A549 (cell line): ENCODE measurements at regions of chr5 and their contacts with region 1.

Region 1: GRCh38 chr5:157059093-157059539 is at the start of gene HAVCR1:
- DNase-seq: peak; percentile 85 to 93
- ATAC-seq: peak; percentile 84 to 88
- H3K4me3 ChIP-seq: peak within 1 kb of the TSS; percentile 48
- H3K27ac ChIP-seq: peak within 1 kb of the TSS; percentile 89 to 92
- H3K4me1 ChIP-seq: peaks cover 67% of the 10 kb centered on the region
- CTCF ChIP-seq: no peak
- EP300 ChIP-seq: peak; percentile 41 to 44; a peak in 2 of 5 replicates
- POLR2A ChIP-seq: no peak
- RAD21 ChIP-seq: peak in 1 of 2 experiments; percentile 46; a peak in 4 of 5 replicates
- polyA plus RNA-seq, gene HAVCR1: 94.7 and 143 TPM in 2 replicates

Region 2: DNA sequence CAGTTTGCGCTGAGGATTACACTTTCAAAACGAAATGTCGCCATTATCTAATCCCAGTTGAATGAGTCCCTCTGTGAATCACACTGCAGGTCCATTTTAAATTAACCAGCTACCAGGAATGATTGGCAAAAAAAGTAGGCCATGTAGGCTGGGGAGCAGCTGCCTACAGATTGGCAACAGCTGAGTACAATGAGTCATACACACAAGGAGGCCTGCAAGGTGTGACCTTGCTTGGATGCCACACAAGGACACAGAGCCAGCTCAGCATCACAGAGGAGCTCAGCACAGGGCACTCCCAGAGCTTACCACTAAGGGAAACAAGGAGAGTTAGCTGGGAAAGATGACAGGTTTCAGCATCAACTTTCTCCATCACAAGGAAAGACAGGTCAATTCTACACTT is 13.1 kb before region 1 on chr5:
- CTCF ChIA-PET with region 1: interaction called, 17 read pairs
- POLR2A ChIA-PET with region 1: interaction called, 11 read pairs
- DNase-seq: peak; percentile 60 to 92
- ATAC-seq: peak; percentile 89 to 93
- H3K4me3 ChIP-seq: no peak overlapping the region
- H3K27ac ChIP-seq: peak overlapping the region; percentile 89 to 94
- H3K4me1 ChIP-seq: peaks cover 67% of the 10 kb centered on the region
- CTCF ChIP-seq: no peak
- EP300 ChIP-seq: peak; percentile 55 to 71; a peak in 3 of 5 replicates
- POLR2A ChIP-seq: no peak
- RAD21 ChIP-seq: peak; percentile 18 to 47; a peak in 3 of 5 replicates

Region 3: GRCh38 chr5:157121709-157122108 is 62.6 kb after region 1 on chr5:
- CTCF ChIA-PET with region 1: no interaction called
- POLR2A ChIA-PET with region 1: no interaction called
- DNase-seq: no peak
- ATAC-seq: no peak
- H3K4me3 ChIP-seq: no peak overlapping the region
- H3K27ac ChIP-seq: no peak overlapping the region
- H3K4me1 ChIP-seq: no peaks in the 10 kb centered on the region
- CTCF ChIP-seq: no peak
- EP300 ChIP-seq: no peak
- POLR2A ChIP-seq: no peak
- RAD21 ChIP-seq: no peak